Activated naive CD4-positive, alpha-beta T cell treated with anti-CD3 and anti-CD28 coated beads for 36 hours (primary cell): ENCODE measurements at regions of chr9 and their contacts with region 1.

Region 1: DNA sequence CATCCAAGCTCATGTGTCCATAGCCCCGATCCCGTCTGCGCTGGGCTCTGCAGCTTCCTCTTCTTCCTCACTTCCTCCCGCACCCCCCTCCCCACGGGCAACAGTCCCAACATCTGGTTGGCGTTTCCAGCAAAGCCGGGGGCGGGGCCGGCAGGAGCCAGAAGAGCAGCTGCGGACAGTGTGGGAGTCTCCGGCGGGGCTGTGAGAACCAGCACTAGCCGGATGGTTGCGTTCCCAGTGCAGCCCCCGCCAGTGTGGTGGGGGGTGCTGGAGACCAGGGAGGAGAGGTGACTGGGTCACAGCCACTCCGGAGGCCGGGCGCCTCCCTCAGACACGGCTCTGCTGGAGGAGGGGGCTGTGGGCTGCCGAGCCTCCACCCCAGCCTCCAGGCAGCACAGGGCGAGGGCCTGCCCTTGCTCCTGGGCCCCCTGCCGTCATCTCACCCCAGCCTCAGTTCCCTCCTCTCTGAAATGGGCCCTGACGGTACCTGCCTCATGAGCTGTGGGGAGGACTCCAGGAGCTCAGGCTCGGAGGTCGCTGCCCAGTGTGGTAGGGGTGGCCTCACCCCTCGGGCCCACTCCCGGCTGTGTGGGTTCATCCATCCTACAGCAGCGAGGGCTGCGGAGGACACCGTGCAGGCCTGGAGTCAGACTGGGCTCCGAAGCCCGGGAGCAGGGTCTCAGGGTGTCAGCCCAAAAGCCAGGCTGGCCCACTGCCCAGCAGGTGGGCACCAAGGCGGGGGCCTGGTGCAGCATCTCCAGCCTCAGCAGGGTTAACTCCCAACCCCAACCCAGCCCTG is 41.5 kb upstream of the NOTCH1 start:
- DNase-seq: no peak
- H3K4me3 Mint-ChIP-seq: no peak overlapping the region
- H3K27ac Mint-ChIP-seq: no peak overlapping the region
- H3K4me1 Mint-ChIP-seq: peaks cover 14% of the 10 kb centered on the region
- H3K27me3 Mint-ChIP-seq: no peaks in the 10 kb centered on the region

Region 2: DNA sequence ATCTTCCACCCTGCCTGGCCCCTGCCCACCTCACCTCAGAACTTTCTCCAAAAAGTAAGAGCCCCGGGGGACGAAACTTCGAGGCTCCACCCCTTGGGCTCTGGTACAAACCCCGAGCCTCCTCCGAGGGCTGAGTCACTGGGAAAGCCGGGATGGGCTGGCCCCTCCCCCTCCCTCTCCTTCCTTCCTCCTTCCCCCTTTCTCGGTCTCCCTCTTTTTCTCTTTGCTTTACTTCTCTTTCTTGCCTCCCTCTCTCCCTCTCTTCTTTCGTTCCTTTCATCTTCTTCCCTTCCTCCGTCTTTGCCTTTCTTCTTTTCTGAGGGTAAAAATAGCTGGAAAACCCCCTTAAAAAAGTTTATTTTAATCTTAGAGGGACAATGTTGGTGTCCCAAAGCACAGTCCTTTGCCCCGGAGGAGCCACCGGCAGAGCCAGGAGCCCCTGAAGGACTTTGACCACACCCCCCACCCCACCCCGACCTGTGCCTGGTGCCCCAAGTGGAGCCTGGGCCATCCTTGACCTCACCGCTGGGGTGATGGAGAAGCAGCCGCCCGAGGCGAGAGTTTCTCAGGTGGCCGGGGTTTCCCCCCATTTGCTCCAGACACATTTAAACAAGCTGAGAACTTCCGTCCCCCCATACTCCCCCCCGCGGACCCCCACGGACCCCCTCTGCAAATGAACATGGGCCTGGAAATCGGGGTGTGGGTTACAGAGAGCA is 35.8 kb before region 1 on chr9:
- CTCF ChIA-PET with region 1: no interaction called
- intact Hi-C with region 1: loop called (anchors 5 kb)
- DNase-seq: no peak
- H3K4me3 Mint-ChIP-seq: no peak overlapping the region
- H3K27ac Mint-ChIP-seq: peak overlapping the region; percentile 47
- H3K4me1 Mint-ChIP-seq: peaks cover 33% of the 10 kb centered on the region
- H3K27me3 Mint-ChIP-seq: no peaks in the 10 kb centered on the region